Activated naive CD4-positive, alpha-beta T cell treated with anti-CD3 and anti-CD28 coated beads for 36 hours (primary cell): ENCODE measurements at regions of chr9 and their contacts with region 1.

Region 1: GRCh38 chr9:129884220-129885017 is 49.2 kb downstream of the USP20 start:
- DNase-seq: peak; percentile 98
- H3K4me3 Mint-ChIP-seq: peak overlapping the region; percentile 92
- H3K27ac Mint-ChIP-seq: peak overlapping the region; percentile 99
- H3K4me1 Mint-ChIP-seq: peaks cover 41% of the 10 kb centered on the region
- H3K27me3 Mint-ChIP-seq: no peaks in the 10 kb centered on the region

Region 2: GRCh38 chr9:129726322-129727160 is 157.9 kb before region 1 on chr9:
- CTCF ChIA-PET with region 1: no interaction called
- intact Hi-C with region 1: loop called (anchors 2 kb)
- DNase-seq: peak; percentile 76
- H3K4me3 Mint-ChIP-seq: peak overlapping the region; percentile 36
- H3K27ac Mint-ChIP-seq: no peak overlapping the region
- H3K4me1 Mint-ChIP-seq: peaks cover 2% of the 10 kb centered on the region
- H3K27me3 Mint-ChIP-seq: no peaks in the 10 kb centered on the region

Region 3: DNA sequence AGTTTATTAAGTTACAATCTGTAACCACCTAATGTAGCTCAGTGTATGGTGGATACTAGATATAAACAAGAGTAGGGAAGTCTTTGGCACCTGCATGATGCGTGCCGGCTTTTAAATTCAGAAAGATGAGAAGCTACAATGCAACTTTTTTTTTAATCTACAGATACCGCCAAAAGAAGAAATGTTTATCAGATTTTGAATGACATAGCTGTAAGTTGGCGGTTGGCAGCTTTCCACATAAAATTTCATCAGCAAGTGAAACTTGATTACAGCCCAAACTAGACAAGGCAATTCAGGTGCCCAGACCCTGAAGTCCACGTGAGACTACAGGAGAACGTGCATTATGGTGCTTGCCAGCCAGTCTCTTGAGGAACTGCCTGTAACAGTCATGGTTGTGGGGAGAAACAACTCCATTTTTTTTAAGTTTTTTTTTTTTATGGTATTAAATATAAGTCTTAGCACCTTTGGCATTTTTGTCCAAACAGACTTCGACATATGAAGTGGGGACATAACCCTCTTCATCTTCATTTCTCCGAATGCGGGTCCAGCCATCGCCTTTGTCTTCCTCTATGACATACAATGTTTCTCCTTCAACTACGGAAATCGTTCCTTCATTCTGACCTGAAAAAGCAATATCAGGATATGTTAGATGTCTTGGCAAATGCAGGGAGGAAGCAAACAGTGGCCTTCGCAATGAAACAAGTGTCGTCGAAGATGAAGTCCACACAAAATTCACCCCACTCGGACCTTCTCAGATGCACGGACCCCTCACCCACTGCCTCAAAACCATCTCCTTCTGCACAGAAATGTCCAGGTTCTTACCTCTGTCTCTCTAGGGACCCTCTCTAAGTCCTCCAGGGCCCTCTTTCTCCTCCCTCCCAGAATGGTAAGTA is 11.2 kb after region 1 on chr9:
- CTCF ChIA-PET with region 1: interaction called, 10 read pairs
- intact Hi-C with region 1: loop called (anchors 1 kb)
- DNase-seq: peak; percentile 71
- H3K4me3 Mint-ChIP-seq: no peak overlapping the region
- H3K27ac Mint-ChIP-seq: peak overlapping the region; percentile 89
- H3K4me1 Mint-ChIP-seq: peaks cover 76% of the 10 kb centered on the region
- H3K27me3 Mint-ChIP-seq: no peaks in the 10 kb centered on the region

Region 4: DNA sequence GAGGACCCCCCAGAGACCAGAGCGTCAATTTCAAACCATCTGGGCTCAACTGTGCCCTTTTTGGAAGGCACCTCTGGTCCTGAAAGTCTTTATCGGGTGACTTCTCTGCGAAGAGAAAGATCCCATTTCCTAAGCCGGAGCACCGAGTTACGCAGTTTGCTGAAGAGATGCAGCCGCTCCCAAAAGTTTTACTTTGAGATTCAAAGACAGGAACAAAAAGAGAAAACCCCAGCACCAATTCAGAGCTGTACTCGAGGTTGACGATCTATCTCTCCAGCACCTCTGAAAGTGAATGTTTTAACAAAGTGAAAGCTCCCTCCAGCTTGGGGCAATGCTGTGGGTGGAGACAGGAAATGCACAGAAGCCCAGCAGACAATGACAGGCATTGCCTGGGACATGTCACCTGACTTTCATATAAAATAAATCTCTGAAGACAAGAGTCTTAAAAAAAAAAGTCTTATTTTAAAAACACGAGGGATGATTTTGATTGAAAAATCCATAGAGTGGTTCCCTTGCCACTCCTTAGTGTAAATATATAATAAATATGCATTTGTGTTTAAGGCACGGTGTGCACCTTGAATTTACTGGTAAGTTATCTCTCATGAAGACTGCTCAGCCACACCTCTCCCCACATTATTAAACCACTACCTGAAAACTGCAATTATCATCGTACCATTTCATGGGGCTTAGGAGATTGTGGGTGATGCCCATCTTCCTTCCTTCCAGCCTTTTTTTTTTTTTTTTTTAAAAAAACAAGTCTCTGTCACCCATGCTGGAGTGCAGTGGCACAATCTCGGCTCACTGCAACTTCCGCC is 78.7 kb after region 1 on chr9:
- CTCF ChIA-PET with region 1: interaction called, 7 read pairs
- intact Hi-C with region 1: loop called (anchors 2 kb)
- DNase-seq: peak; percentile 89
- H3K4me3 Mint-ChIP-seq: peak overlapping the region; percentile 70
- H3K27ac Mint-ChIP-seq: peak overlapping the region; percentile 95
- H3K4me1 Mint-ChIP-seq: peaks cover 78% of the 10 kb centered on the region
- H3K27me3 Mint-ChIP-seq: no peaks in the 10 kb centered on the region

Region 5: DNA sequence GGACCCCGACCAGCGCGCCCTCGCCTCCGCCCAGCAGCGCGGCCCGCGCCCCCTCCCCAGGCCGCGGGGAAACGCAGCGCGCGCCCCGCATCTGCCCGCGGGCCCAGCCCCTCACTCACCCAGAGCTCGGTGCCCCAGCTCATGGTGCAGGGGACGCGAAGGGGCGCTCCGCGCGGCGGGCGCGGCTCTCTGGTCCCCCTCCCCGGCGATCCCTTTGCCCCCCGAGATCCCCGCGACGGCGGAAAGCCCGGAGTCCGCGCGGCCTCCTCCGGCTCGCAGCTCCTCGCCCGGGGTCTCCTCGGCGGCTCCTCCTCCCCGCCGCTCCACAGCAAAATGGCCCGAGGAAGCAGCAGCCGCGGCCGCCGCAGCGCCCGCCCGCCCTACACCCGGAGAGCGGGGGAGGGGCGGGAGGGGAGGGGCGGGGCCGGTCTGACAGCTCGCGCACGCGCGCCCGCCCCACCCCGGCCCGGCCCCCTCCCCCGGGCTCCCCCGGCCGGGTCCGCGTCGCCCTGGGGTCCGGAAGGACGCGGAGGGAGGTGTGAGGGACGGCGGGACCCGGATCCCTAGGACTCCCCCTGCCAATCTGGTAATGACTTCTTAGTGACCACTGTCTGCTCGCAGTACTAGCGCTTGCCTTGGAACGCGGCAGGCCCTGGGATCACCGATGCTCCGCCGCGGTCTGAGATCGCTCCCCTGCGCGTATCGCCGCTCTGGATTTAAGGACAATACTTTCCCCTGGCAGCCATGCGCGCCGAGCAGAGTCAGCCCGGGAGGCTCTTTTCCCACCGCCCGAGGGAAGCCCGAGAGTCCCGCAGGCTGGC is 158.6 kb after region 1 on chr9 and contains the start of gene FNBP1:
- CTCF ChIA-PET with region 1: interaction called, 14 read pairs
- intact Hi-C with region 1: loop called (anchors 1 kb)
- DNase-seq: peak; percentile 81
- H3K4me3 Mint-ChIP-seq: peak within 1 kb of the TSS; percentile 100
- H3K27ac Mint-ChIP-seq: peak within 1 kb of the TSS; percentile 100
- H3K4me1 Mint-ChIP-seq: peaks cover 39% of the 10 kb centered on the region
- H3K27me3 Mint-ChIP-seq: no peaks in the 10 kb centered on the region
- total RNA-seq, gene FNBP1: 126 to 128 TPM

Region 6: DNA sequence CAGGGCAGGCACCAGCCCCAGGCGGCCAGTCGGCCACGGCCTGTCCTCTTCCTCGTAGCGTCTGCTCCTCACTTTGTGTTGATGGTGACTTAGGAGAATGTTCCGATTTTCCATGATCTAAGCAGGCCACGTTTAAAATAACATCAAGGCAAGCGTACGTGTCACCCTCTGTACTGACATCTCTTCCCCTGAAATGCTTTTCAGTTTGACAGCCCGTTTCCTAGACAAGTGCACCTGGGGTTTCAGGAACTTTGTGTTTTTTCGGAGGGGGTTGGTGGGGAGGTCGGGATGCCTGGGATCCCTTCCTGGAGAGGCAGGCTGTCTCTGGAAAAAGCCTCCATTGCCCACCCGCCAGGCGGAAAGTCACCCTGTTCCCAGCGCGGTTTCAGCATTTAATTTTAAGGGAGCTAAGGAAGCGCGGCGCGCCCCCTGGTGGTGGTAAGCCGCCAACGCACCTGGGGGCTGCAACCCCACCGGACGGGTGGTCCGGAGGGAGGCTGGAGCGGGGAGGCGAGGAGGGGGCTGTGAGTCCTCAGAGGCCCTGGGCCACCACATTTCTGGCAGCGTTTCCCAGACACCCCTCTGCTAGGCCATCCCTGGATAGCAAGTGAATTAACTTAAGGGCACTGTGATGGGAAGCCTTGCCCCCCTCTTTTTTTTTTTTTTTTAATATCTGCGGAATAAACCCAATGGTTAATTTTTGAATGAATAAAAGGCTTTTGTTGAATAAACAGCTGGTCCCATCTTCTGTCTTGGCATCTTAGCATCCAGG is 351.7 kb after region 1 on chr9:
- CTCF ChIA-PET with region 1: interaction called, 4 read pairs
- intact Hi-C with region 1: loop called (anchors 1 kb)
- DNase-seq: peak; percentile 73
- H3K4me3 Mint-ChIP-seq: no peak overlapping the region
- H3K27ac Mint-ChIP-seq: no peak overlapping the region
- H3K4me1 Mint-ChIP-seq: peaks cover 27% of the 10 kb centered on the region
- H3K27me3 Mint-ChIP-seq: no peaks in the 10 kb centered on the region